GM12878 (cell line): ENCODE measurements at regions of chr1 and their contacts with region 1.

Region 1: DNA sequence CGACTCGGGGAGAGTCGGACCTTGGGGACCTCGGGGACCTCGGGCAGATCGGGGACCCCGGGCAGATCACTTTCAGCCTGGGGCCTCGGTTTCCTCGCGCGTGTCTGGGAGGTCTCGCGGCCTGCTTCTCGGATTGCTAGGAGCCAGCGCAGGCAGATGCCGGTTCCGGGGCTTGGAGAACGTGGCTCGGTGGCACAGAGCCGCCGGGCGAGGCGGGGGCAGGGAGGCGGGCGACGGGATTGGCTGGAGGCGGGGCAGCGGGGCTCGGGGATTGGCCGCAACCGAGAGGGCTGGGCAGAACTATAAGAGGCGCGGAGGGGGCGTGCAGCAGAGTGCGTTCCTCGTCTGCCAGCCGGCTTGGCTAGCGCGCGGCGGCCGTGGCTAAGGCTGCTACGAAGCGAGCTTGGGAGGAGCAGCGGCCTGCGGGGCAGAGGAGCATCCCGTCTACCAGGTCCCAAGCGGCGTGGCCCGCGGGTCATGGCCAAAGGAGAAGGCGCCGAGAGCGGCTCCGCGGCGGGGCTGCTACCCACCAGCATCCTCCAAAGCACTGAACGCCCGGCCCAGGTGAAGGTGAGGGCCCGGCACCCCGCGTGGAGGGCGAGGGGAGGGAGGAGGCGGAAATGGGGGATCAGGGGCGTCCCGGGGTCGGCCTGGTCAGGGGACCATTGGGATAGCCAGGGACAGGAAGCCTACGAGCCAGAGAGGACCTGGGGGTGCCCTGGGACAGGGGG is at the start of gene MFSD2A:
- DNase-seq: peak; percentile 55
- ATAC-seq: peak; percentile 93
- H3K4me3 ChIP-seq: peak within 1 kb of the TSS; percentile 89
- H3K27ac ChIP-seq: peak within 1 kb of the TSS; percentile 74
- H3K4me1 ChIP-seq: peaks cover 14% of the 10 kb centered on the region
- H3K27me3 ChIP-seq: no peaks in the 10 kb centered on the region
- CTCF ChIP-seq: no peak
- EP300 ChIP-seq: no peak
- POLR2A ChIP-seq: peak; percentile 96
- RAD21 ChIP-seq: no peak
- polyA plus RNA-seq, gene MFSD2A: 0.84 to 1.9 TPM

Region 2: GRCh38 chr1:40003156-40004148 is 48.5 kb after region 1 on chr1:
- CTCF ChIA-PET with region 1: interaction called, 4 read pairs
- POLR2A ChIA-PET with region 1: interaction called, 7 read pairs
- RAD21 ChIA-PET with region 1: interaction called, 11 read pairs
- SMC1A ChIA-PET with region 1: interaction called, 4 read pairs
- in situ Hi-C with region 1: no loop called
- intact Hi-C with region 1: no loop called
- DNase-seq: peak; percentile 53
- ATAC-seq: peak; percentile 95
- H3K4me3 ChIP-seq: 0 out of 2 replicates have a peak overlapping the region, but pooled peaks have one; percentile 16
- H3K27ac ChIP-seq: peak overlapping the region; percentile 89
- H3K4me1 ChIP-seq: peaks cover 42% of the 10 kb centered on the region
- H3K27me3 ChIP-seq: no peaks in the 10 kb centered on the region
- CTCF ChIP-seq: no peak
- EP300 ChIP-seq: no peak
- POLR2A ChIP-seq: no peak
- RAD21 ChIP-seq: no peak